Tibial artery (tissue), 4 donors: ENCODE measurements at regions of chr7 and their contacts with region 1.

Region 1: GRCh38 chr7:44240983-44241510 is 40.3 kb downstream of the YKT6 start:
- DNase-seq: peak; percentile 65 to 83
- H3K4me3 ChIP-seq: peak overlapping the region in 1 of 2 donors; percentile 33
- H3K27ac ChIP-seq: no peak overlapping the region
- H3K4me1 ChIP-seq: peaks cover 0 to 7% (median 3%) of the 10 kb centered on the region in 4 donors
- H3K27me3 ChIP-seq: peaks cover 0 to 20% of the 10 kb centered on the region in 2 donors
- CTCF ChIP-seq: peak; percentile 75 to 79

Region 2: GRCh38 chr7:43735802-43736541 is 505.1 kb before region 1 on chr7:
- intact Hi-C with region 1: no loop called
- DNase-seq: no peak
- H3K4me3 ChIP-seq: no peak overlapping the region
- H3K27ac ChIP-seq: no peak overlapping the region
- H3K4me1 ChIP-seq: no peaks in the 10 kb centered on the region
- H3K27me3 ChIP-seq: no peaks in the 10 kb centered on the region
- CTCF ChIP-seq: no peak

Region 3: DNA sequence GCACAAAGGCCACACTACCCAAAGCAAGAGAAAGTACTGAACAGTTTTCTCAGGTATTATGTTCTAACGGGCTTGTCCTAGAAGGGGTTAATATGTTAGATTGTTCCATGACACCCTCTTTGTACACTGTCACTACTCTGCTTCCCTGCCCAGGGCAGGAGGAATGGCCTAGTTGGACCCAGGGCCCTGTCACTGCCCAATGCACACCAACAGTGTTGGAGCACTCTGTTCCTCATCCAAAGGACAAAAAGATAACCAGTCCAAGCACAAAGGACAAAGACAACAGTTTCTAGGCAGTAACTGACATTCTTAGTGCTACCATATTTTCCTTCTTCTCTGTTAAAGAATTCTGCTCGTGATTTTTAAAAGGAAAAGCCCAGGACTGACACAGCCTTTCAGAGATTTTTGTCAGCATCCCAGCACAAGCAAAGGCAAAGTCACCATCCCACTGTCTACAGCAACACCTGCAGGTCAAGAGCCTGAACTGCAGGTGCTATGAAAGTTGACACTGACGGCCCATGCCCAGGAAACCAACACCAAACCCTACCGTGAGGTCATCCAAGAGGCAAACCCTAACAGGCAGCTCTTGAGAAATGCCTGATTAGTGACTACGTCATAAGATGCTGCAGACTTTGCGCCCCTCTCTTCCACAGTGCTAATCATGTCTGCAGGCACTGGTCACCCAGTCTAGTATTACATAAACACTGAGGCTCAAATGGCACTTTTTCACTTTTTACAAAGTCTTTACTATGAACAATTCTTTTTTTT is 236.2 kb after region 1 on chr7:
- intact Hi-C with region 1: loop called (anchors 5 kb)
- DNase-seq: peak in 1 of 2 donors; percentile 36
- H3K4me3 ChIP-seq: no peak overlapping the region
- H3K27ac ChIP-seq: no peak overlapping the region
- H3K4me1 ChIP-seq: peaks cover 0 to 13% (median 5%) of the 10 kb centered on the region in 4 donors
- H3K27me3 ChIP-seq: no peaks in the 10 kb centered on the region
- CTCF ChIP-seq: peak; percentile 84 to 86

Region 4: DNA sequence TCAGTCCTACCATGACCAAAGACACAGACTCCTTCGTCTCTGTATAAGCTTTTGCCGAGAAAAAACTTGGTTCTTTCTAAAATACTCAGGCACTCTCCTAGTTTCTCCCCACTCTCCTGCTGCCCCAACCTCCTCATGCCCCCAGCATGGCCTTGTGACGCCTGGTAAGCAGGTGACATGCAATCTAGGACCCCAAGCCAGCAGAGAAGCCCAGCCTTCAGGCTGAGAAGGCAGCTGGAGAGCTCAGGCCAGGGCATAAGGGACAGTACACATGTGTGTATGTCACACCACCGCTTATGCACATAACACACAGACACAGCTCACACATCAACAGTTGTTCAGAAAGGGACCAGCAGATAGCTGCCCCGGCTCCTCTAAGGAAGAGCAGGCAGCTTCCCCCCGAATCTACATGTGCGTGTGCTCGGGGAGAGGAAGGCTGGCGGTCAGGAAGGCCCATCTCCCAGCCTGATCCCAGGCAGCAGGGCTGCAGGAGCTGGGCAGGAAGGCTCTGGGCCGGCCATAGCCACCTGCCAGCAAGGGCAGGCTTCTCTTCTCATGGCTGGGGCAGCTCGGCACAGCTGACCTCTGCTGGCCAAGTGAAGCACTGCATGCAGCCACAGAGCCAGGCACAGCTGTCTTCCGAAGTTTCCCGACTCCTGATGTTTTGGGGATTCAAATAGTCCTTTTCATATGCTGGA is 324.2 kb after region 1 on chr7:
- intact Hi-C with region 1: loop called (anchors 10 kb)
- DNase-seq: peak; percentile 47 to 77
- H3K4me3 ChIP-seq: no peak overlapping the region
- H3K27ac ChIP-seq: peak overlapping the region in 1 of 2 donors; percentile 38
- H3K4me1 ChIP-seq: no peaks in the 10 kb centered on the region
- H3K27me3 ChIP-seq: no peaks in the 10 kb centered on the region
- CTCF ChIP-seq: peak; percentile 87 to 95